ENCODE measurements at regions of chr19 and their contacts with region 1.

Region 1: GRCh38 chr19:31461814-31462539 is 112.7 kb upstream of the TSHZ3 start:
- DNase-seq: no peak
- ATAC-seq: no peak; the same call in 1 of the 2 replicates
- H3K4me3 ChIP-seq: no peak overlapping the region
- H3K27ac ChIP-seq: no peak overlapping the region
- H3K4me1 ChIP-seq: no peaks in the 10 kb centered on the region
- H3K27me3 ChIP-seq: no peaks in the 10 kb centered on the region; the same call in 1 of the 2 replicates
- CTCF ChIP-seq: no peak
- POLR2A ChIP-seq: no peak
- RAD21 ChIP-seq: no peak

Region 2: GRCh38 chr19:30183807-30184490 is 1278.0 kb before region 1 on chr19:
- CTCF ChIA-PET with region 1: no interaction called
- POLR2A ChIA-PET with region 1: no interaction called
- dilution Hi-C with region 1: no loop called
- in situ Hi-C with region 1: no loop called
- intact Hi-C with region 1: loop called (anchors 10 kb)
- DNase-seq: no peak
- ATAC-seq: no peak
- H3K4me3 ChIP-seq: no peak overlapping the region
- H3K27ac ChIP-seq: no peak overlapping the region
- H3K4me1 ChIP-seq: no peaks in the 10 kb centered on the region
- H3K27me3 ChIP-seq: no peaks in the 10 kb centered on the region
- CTCF ChIP-seq: no peak
- POLR2A ChIP-seq: no peak
- RAD21 ChIP-seq: no peak

Measured in IMR-90 (cell line).